MCF 10A (cell line): ENCODE measurements at regions of chr5 and their contacts with region 1.

Region 1: DNA sequence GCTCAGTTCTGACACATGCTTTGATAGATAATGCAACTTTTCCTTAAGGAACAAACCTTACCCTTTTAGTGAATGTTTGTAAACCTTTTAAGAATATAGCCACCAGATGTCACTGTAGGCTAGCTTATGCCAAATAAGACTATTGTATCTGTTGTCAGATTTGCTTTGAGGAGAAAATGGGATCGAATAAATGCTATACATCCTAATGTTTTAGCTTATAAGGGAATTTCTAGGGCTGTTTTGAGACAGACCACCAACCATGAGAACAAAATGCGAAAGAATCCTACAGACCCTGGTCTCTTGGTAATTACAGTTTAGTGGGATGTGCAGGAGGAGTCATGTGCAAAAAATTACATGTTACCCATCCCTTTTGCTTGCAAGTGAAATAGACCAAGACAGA is 127.6 kb upstream of the NMUR2 start:
- DNase-seq: peak; percentile 75
- H3K4me3 Mint-ChIP-seq: no peak overlapping the region
- H3K27ac Mint-ChIP-seq: peak overlapping the region; percentile 24
- H3K4me1 Mint-ChIP-seq: no peaks in the 10 kb centered on the region
- H3K27me3 Mint-ChIP-seq: no peaks in the 10 kb centered on the region
- CTCF ChIP-seq: peak; percentile 80

Region 2: GRCh38 chr5:152514827-152515397 is 17.8 kb before region 1 on chr5:
- CTCF ChIA-PET with region 1: interaction called, 25 read pairs
- POLR2A ChIA-PET with region 1: no interaction called
- intact Hi-C with region 1: no loop called
- DNase-seq: peak; percentile 56
- H3K4me3 Mint-ChIP-seq: no peak overlapping the region
- H3K27ac Mint-ChIP-seq: no peak overlapping the region
- H3K4me1 Mint-ChIP-seq: no peaks in the 10 kb centered on the region
- H3K27me3 Mint-ChIP-seq: no peaks in the 10 kb centered on the region
- CTCF ChIP-seq: peak; percentile 36

Region 3: GRCh38 chr5:152542741-152543140 is 10.0 kb after region 1 on chr5:
- CTCF ChIA-PET with region 1: interaction called, 30 read pairs
- POLR2A ChIA-PET with region 1: no interaction called
- intact Hi-C with region 1: no loop called
- DNase-seq: peak; percentile 73
- H3K4me3 Mint-ChIP-seq: no peak overlapping the region
- H3K27ac Mint-ChIP-seq: no peak overlapping the region
- H3K4me1 Mint-ChIP-seq: peaks cover 12% of the 10 kb centered on the region
- H3K27me3 Mint-ChIP-seq: no peaks in the 10 kb centered on the region
- CTCF ChIP-seq: no peak

Region 4: DNA sequence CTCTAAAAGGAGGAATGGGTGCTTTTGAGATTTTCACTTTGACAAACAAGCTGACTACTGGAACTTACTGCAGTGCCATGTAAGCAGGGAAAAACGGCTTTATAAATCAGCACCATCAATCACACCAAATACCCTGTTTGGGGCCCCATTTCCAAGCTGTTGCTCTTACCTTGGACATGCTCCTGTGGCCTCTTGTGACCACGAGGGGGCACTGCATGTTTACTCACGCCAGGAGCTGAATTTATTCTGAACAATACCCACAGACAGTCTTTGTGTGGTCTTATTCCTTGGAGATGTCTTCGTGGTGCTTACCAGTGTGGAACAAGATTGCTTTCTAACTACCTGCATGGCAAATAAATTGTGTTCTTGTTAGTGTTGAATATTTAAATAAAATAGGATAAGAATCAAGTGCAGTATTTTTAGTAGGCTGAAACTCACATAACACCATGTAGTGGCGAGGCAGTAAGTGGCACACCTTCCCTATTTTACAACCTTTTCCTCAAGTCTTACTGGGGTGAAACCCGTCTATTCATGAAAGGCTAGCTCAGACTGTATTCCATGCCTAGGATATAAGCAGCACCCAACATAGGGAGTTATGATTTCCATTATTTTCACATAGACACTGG is 27.9 kb after region 1 on chr5:
- CTCF ChIA-PET with region 1: interaction called, 17 read pairs
- POLR2A ChIA-PET with region 1: no interaction called
- intact Hi-C with region 1: no loop called
- DNase-seq: peak; percentile 82
- H3K4me3 Mint-ChIP-seq: no peak overlapping the region
- H3K27ac Mint-ChIP-seq: no peak overlapping the region
- H3K4me1 Mint-ChIP-seq: no peaks in the 10 kb centered on the region
- H3K27me3 Mint-ChIP-seq: no peaks in the 10 kb centered on the region
- CTCF ChIP-seq: peak; percentile 96

Region 5: GRCh38 chr5:153122403-153122802 is 589.7 kb after region 1 on chr5:
- CTCF ChIA-PET with region 1: interaction called, 11 read pairs
- POLR2A ChIA-PET with region 1: no interaction called
- intact Hi-C with region 1: no loop called
- DNase-seq: no peak
- H3K4me3 Mint-ChIP-seq: no peak overlapping the region
- H3K27ac Mint-ChIP-seq: no peak overlapping the region
- H3K4me1 Mint-ChIP-seq: no peaks in the 10 kb centered on the region
- H3K27me3 Mint-ChIP-seq: no peaks in the 10 kb centered on the region
- CTCF ChIP-seq: no peak

Region 6: DNA sequence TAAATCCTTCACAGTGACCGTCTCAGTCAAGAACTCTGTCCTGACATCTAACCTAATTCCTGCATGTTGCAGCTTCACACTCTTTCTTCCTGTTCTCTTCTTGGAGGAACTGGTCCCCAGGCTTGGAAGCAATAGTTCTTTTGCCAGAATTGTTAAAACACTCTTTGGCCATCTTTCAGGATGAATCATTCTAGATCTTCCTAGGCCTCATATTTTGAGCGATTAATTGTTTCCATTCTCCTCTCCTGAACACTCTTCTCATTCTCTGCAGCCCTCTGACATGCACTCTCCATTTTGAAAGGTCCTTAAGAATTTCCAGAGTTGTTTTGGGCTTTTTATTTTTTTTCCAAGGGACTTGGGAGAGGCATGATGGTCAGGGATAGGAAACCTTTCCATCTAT is 1420.2 kb after region 1 on chr5:
- CTCF ChIA-PET with region 1: interaction called, 17 read pairs
- POLR2A ChIA-PET with region 1: no interaction called
- intact Hi-C with region 1: no loop called
- DNase-seq: no peak
- H3K4me3 Mint-ChIP-seq: no peak overlapping the region
- H3K27ac Mint-ChIP-seq: no peak overlapping the region
- H3K4me1 Mint-ChIP-seq: no peaks in the 10 kb centered on the region
- H3K27me3 Mint-ChIP-seq: no peaks in the 10 kb centered on the region
- CTCF ChIP-seq: no peak

Region 7: GRCh38 chr5:153974131-153974812 is 1441.6 kb after region 1 on chr5:
- CTCF ChIA-PET with region 1: interaction called, 160 read pairs
- POLR2A ChIA-PET with region 1: interaction called, 8 read pairs
- intact Hi-C with region 1: no loop called
- DNase-seq: peak; percentile 68
- H3K4me3 Mint-ChIP-seq: no peak overlapping the region
- H3K27ac Mint-ChIP-seq: no peak overlapping the region
- H3K4me1 Mint-ChIP-seq: no peaks in the 10 kb centered on the region
- H3K27me3 Mint-ChIP-seq: peaks cover 21% of the 10 kb centered on the region
- CTCF ChIP-seq: peak; percentile 94